ENCODE measurements at regions of chr20 and their contacts with region 1.

Region 1: DNA sequence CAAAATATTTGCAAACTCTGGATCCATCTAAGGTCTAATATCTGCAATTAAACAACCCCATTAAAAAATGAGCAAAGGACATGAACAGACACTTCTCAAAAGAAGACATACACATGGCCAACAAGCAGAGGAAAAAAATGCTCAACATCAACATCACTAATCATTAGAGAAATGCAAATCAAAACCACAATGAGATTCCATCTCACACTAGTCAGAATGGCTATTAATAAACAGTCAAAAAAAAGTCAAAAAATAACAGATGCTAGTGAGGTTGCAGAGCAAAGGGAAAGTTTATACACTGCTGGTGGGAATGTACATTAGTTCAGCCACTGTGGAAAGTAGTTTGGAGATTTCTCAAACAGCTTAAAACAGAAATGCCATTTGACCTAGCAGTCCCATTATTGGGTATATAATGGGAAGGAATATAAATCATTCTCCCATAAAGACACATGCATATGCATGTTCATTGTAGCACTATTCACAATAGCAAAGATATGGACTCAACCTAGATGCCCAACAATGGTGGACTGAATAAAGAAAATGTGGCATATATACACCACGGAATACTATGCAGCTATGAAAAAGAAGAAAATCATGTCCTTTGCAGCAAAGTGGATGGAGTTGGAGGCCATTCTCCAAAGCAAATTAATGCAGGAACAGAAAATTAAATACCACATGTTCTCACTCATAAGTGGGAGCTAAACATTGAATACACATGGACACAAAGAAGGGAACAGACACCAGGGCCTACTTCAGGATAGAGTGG is 9.1 kb downstream of the ZNFX1 start:
- DNase-seq: no peak
- H3K4me3 Mint-ChIP-seq: peak overlapping the region; percentile 74
- H3K27ac Mint-ChIP-seq: peak overlapping the region; percentile 67
- H3K4me1 Mint-ChIP-seq: peaks cover 77% of the 10 kb centered on the region
- H3K27me3 Mint-ChIP-seq: no peaks in the 10 kb centered on the region

Region 2: GRCh38 chr20:49103647-49104594 is 164.9 kb before region 1 on chr20:
- CTCF ChIA-PET with region 1: no interaction called
- POLR2A ChIA-PET with region 1: no interaction called
- DNase-seq: no peak
- H3K4me3 Mint-ChIP-seq: no peak overlapping the region
- H3K27ac Mint-ChIP-seq: no peak overlapping the region
- H3K4me1 Mint-ChIP-seq: peaks cover 13% of the 10 kb centered on the region
- H3K27me3 Mint-ChIP-seq: no peaks in the 10 kb centered on the region

Region 3: GRCh38 chr20:49252556-49253350 is 16.0 kb before region 1 on chr20:
- CTCF ChIA-PET with region 1: no interaction called
- POLR2A ChIA-PET with region 1: interaction called, 10 read pairs
- DNase-seq: no peak
- H3K4me3 Mint-ChIP-seq: no peak overlapping the region
- H3K27ac Mint-ChIP-seq: no peak overlapping the region
- H3K4me1 Mint-ChIP-seq: no peaks in the 10 kb centered on the region
- H3K27me3 Mint-ChIP-seq: no peaks in the 10 kb centered on the region

Region 4: GRCh38 chr20:49310705-49311104 is 41.9 kb after region 1 on chr20:
- CTCF ChIA-PET with region 1: no interaction called
- POLR2A ChIA-PET with region 1: no interaction called
- DNase-seq: no peak
- H3K4me3 Mint-ChIP-seq: no peak overlapping the region
- H3K27ac Mint-ChIP-seq: no peak overlapping the region
- H3K4me1 Mint-ChIP-seq: peaks cover 3% of the 10 kb centered on the region
- H3K27me3 Mint-ChIP-seq: peaks cover 26% of the 10 kb centered on the region

Region 5: DNA sequence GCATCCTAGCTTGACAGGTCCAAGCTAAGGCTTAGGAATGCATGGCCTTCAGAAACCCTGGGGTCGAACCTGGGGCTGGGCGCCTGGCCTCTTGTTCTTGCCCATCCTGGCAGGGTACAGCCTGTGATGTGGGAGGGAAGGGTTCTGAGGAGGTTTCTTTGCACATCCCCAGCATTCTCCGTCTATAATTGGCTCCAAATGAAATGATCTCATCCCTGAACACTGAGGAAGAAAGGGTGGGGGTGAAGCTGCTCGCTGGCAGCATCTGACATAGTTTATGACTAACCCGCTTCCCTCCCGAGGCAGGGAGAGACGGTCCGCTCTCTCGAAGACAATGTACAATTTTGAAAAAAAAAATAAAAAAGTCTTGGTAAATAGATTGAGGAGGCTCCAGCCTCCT is 76.2 kb after region 1 on chr20:
- CTCF ChIA-PET with region 1: no interaction called
- POLR2A ChIA-PET with region 1: no interaction called
- DNase-seq: no peak
- H3K4me3 Mint-ChIP-seq: no peak overlapping the region
- H3K27ac Mint-ChIP-seq: no peak overlapping the region
- H3K4me1 Mint-ChIP-seq: no peaks in the 10 kb centered on the region
- H3K27me3 Mint-ChIP-seq: peaks cover 25% of the 10 kb centered on the region

Measured in activated CD4-positive, alpha-beta memory T cell treated with anti-CD3 and anti-CD28 coated beads, Interleukin-2, amount 10 ng/mL, durations not matched to agents 7 days and 5 days (primary cell).